Left ventricle myocardium superior (tissue), 1 donor: ENCODE measurements at regions of chr11 and their contacts with region 1.

Region 1: DNA sequence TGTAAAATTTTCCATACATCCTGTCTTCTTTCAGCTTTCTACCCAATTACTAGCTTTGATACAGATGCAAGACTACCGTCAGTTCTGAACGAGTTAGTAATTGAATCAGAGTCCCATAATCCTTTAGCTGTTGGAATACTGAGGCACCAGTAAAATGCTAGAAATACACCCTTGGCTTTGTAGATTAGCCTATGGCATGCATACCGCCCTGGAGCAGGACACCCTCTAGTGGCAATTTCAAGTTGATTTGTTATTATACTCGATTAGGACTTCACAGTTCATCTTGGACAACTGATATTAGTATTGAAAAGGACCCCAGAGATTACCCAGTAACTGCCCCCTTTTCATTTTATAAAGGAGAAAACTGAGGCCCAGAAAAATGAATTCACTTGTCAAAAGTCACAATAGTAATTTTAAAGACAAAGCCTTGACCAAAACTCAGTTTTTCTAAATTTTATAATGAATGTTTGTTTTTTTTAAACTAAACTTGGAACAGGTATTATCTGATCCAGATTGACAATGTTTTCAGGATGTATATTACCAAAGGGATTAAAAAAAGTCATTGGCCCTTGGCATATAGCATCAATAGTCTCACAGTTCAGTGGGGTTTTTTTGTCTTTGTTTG is 72.6 kb downstream of the HIPK3 start:
- DNase-seq: no peak
- ATAC-seq: peak; percentile 72

Region 2: GRCh38 chr11:33257897-33258630 is 71.8 kb before region 1 on chr11:
- intact Hi-C with region 1: loop called (anchors 5 kb)
- DNase-seq: peak; percentile 95
- ATAC-seq: peak; percentile 90

Region 3: GRCh38 chr11:33376331-33377310 is 46.8 kb after region 1 on chr11:
- intact Hi-C with region 1: no loop called
- DNase-seq: peak; percentile 28
- ATAC-seq: peak; percentile 14

Region 4: GRCh38 chr11:33515347-33515746 is 185.5 kb after region 1 on chr11:
- intact Hi-C with region 1: no loop called
- DNase-seq: peak; percentile 33
- ATAC-seq: peak; percentile 46